CD8-positive, alpha-beta T cell (primary cell): ENCODE measurements at regions of chr10 and their contacts with region 1.

Region 1: GRCh38 chr10:119686439-119687191 is 35.4 kb downstream of the BAG3 start:
- DNase-seq: peak; percentile 52 to 89 (median 83)
- ATAC-seq: peak; percentile 95
- H3K4me3 ChIP-seq: peak overlapping the region; percentile 41 to 42
- H3K4me3 Mint-ChIP-seq: peak overlapping the region; percentile 79
- H3K27ac ChIP-seq: peak overlapping the region in 1 of 2 experiments; percentile 36
- H3K27ac Mint-ChIP-seq: peak overlapping the region; percentile 37
- H3K4me1 ChIP-seq: peaks cover 8% of the 10 kb centered on the region
- H3K4me1 Mint-ChIP-seq: peaks cover 16% of the 10 kb centered on the region
- H3K27me3 ChIP-seq: no peaks in the 10 kb centered on the region
- H3K27me3 Mint-ChIP-seq: peaks cover 4% of the 10 kb centered on the region
- CTCF ChIP-seq: peak; percentile 92

Region 2: GRCh38 chr10:119575506-119575905 is 111.1 kb before region 1 on chr10:
- CTCF ChIA-PET with region 1: no interaction called
- POLR2A ChIA-PET with region 1: no interaction called
- intact Hi-C with region 1: no loop called
- DNase-seq: peak in 6 of 9 experiments; percentile 8 to 83 (median 26)
- ATAC-seq: peak; percentile 91
- H3K4me3 ChIP-seq: no peak overlapping the region
- H3K4me3 Mint-ChIP-seq: peak overlapping the region; percentile 2
- H3K27ac ChIP-seq: peak overlapping the region in 1 of 2 experiments; percentile 53
- H3K27ac Mint-ChIP-seq: peak overlapping the region; percentile 86
- H3K4me1 ChIP-seq: peaks cover 17% of the 10 kb centered on the region
- H3K4me1 Mint-ChIP-seq: peaks cover 18% of the 10 kb centered on the region
- H3K27me3 ChIP-seq: no peaks in the 10 kb centered on the region
- H3K27me3 Mint-ChIP-seq: no peaks in the 10 kb centered on the region
- CTCF ChIP-seq: no peak

Region 3: DNA sequence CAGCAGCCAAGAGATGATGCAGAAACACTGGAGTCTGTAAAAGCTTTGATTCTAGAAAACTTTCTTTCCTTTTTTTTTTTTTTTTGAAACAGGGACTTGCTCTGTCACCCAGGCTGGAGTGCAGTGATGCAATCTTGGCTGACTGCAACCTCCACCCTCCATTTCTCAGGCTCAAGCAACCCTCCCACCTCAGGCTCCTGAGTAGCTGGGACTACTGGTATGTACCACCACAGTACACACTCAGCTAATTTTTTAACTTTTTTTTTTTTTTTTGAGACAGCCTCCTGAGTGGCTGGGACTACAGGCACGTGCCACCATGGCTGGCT is 52.4 kb before region 1 on chr10:
- CTCF ChIA-PET with region 1: interaction called, 10 read pairs
- POLR2A ChIA-PET with region 1: no interaction called
- intact Hi-C with region 1: no loop called
- DNase-seq: no peak
- ATAC-seq: no peak
- H3K4me3 ChIP-seq: no peak overlapping the region
- H3K4me3 Mint-ChIP-seq: no peak overlapping the region
- H3K27ac ChIP-seq: no peak overlapping the region
- H3K27ac Mint-ChIP-seq: no peak overlapping the region
- H3K4me1 ChIP-seq: no peaks in the 10 kb centered on the region
- H3K4me1 Mint-ChIP-seq: no peaks in the 10 kb centered on the region
- H3K27me3 ChIP-seq: no peaks in the 10 kb centered on the region
- H3K27me3 Mint-ChIP-seq: no peaks in the 10 kb centered on the region
- CTCF ChIP-seq: no peak

Region 4: DNA sequence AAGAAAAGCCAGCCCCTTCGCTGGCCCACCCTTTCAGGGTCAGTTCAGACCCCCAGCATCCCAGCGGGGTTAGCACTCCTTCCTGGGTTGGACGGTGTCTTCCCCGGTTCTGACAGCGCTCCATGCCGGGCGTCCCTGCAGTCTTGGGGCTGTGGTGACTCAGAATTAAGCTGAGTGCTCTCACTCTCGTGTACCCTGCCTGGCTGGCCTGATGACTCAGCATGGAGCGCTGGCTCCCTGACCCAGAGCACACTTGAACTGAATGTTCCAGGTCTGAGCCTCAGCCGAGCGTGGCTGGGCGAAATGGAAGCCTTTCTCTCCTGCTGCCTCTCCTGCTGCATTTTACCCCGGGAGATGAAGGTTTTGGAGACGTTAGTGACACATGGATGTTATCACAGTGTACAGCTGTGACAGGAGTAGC is 28.4 kb before region 1 on chr10:
- CTCF ChIA-PET with region 1: interaction called, 16 read pairs
- POLR2A ChIA-PET with region 1: no interaction called
- intact Hi-C with region 1: loop called in 1 of 2 experiments (anchors 2 kb)
- DNase-seq: no peak
- ATAC-seq: no peak
- H3K4me3 ChIP-seq: no peak overlapping the region
- H3K4me3 Mint-ChIP-seq: no peak overlapping the region
- H3K27ac ChIP-seq: no peak overlapping the region
- H3K27ac Mint-ChIP-seq: no peak overlapping the region
- H3K4me1 ChIP-seq: peaks cover 41% of the 10 kb centered on the region
- H3K4me1 Mint-ChIP-seq: peaks cover 47% of the 10 kb centered on the region
- H3K27me3 ChIP-seq: no peaks in the 10 kb centered on the region
- H3K27me3 Mint-ChIP-seq: no peaks in the 10 kb centered on the region
- CTCF ChIP-seq: no peak

Region 5: GRCh38 chr10:119725828-119726675 is 39.4 kb after region 1 on chr10 and contains the start of gene INPP5F:
- CTCF ChIA-PET with region 1: interaction called, 5 read pairs
- POLR2A ChIA-PET with region 1: no interaction called
- intact Hi-C with region 1: loop called (anchors 1 kb)
- DNase-seq: peak; percentile 95 to 100 (median 98)
- ATAC-seq: peak; percentile 95
- H3K4me3 ChIP-seq: peak within 1 kb of the TSS; percentile 64 to 81
- H3K4me3 Mint-ChIP-seq: peak within 1 kb of the TSS; percentile 90
- H3K27ac ChIP-seq: peak within 1 kb of the TSS; percentile 33 to 44
- H3K27ac Mint-ChIP-seq: peak within 1 kb of the TSS; percentile 81
- H3K4me1 ChIP-seq: peaks cover 16% of the 10 kb centered on the region
- H3K4me1 Mint-ChIP-seq: peaks cover 27% of the 10 kb centered on the region
- H3K27me3 ChIP-seq: no peaks in the 10 kb centered on the region
- H3K27me3 Mint-ChIP-seq: no peaks in the 10 kb centered on the region
- CTCF ChIP-seq: no peak
- total RNA-seq, gene INPP5F: 3.8 to 6.5 TPM

Region 6: GRCh38 chr10:119919826-119920225 is 233.2 kb after region 1 on chr10:
- CTCF ChIA-PET with region 1: interaction called, 3 read pairs
- POLR2A ChIA-PET with region 1: no interaction called
- intact Hi-C with region 1: loop called in 1 of 2 experiments (anchors 2 kb)
- DNase-seq: no peak
- ATAC-seq: no peak
- H3K4me3 ChIP-seq: no peak overlapping the region
- H3K4me3 Mint-ChIP-seq: no peak overlapping the region
- H3K27ac ChIP-seq: no peak overlapping the region
- H3K27ac Mint-ChIP-seq: no peak overlapping the region
- H3K4me1 ChIP-seq: no peaks in the 10 kb centered on the region
- H3K4me1 Mint-ChIP-seq: no peaks in the 10 kb centered on the region
- H3K27me3 ChIP-seq: no peaks in the 10 kb centered on the region
- H3K27me3 Mint-ChIP-seq: no peaks in the 10 kb centered on the region
- CTCF ChIP-seq: no peak